PC-3 (cell line): ENCODE measurements at regions of chr1 and their contacts with region 1.

Region 1: DNA sequence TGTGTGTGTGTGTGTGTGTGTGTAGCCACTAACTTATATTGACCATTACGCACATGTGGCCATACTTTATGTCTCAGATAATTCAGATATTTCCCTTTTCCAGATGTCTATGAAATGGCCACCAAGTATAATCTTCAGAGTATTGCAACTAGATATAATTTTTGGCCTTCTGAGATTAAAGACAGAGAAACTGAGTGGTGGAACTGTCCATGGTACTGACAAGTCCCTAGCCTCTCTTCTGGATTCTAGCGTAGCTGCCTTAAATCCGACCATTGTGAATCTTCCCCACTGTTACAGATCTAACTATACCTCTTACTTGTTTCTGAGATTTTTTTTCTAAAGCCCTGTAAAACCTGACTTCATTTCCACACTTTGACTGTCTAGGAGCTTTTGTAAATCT is 100.0 kb upstream of the SERTAD4 start:
- DNase-seq: peak; percentile 61
- ATAC-seq: no peak
- H3K4me3 ChIP-seq: no peak overlapping the region
- H3K27ac ChIP-seq: no peak overlapping the region
- H3K4me1 ChIP-seq: no peaks in the 10 kb centered on the region
- H3K27me3 ChIP-seq: no peaks in the 10 kb centered on the region
- CTCF ChIP-seq: no peak

Region 2: DNA sequence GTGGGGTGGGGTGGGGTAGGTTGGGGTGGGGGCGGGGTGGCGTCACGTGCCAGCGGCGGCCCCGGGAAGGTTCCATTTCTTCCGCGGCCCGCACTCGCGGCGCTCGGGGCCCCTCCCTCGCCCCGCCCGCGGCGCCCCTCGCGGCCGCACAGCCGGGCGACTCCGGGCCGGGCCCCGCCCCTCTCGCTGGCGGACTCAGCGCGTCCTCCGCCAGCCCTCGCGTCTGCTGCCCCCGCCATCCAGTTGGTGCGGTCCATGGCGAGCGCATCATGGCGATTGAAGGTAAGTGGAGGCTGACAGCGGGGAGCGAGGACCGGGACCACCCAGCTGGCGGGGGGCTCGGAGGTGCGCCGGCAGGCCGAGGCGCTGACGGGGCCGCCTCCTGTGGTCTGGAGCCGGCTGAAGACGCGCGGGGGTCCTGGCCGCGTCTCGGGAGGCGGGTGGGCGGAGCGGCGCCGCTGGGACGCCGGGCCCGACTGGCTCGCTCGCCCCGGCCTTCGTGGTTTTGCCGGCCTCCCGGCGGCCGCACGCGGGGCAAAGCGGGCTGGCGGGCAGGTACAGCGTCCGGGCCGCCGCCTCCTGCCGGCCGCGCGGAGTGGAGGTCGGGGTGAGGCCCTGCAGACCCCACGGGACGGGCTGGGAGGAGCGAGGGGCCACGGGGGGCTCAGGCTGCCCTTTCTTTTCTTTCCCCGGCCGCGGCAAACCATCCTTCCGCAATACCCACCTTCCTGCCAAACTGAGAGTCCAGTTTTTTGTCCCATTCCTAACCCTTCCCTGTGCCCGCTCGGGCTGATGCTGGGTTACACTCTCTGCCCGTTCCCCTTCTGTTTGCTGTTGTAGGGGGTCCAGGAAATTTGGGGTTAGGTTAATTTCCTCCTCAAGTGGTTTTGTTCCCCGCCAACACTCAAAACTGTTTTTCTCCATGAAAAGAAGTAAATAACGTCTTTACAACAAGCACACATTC is 194.3 kb before region 1 on chr1 and contains the start of gene SYT14:
- CTCF ChIA-PET with region 1: no interaction called
- POLR2A ChIA-PET with region 1: no interaction called
- intact Hi-C with region 1: loop called (anchors 2 kb)
- DNase-seq: peak; percentile 63
- ATAC-seq: peak; percentile 82
- H3K4me3 ChIP-seq: peak within 1 kb of the TSS; percentile 65
- H3K27ac ChIP-seq: no peak within 1 kb of the TSS
- H3K4me1 ChIP-seq: 0 out of 2 replicates have a peak, but pooled peaks cover 9% of the 10 kb centered on the region
- H3K27me3 ChIP-seq: peaks cover 40% of the 10 kb centered on the region
- CTCF ChIP-seq: peak; percentile 29; the same call in 1 of the 2 replicates
- total RNA-seq, gene SYT14: 3.5 and 5.2 TPM in 2 replicates